B cell (primary cell): ENCODE measurements at regions of chr12 and their contacts with region 1.

Region 1: GRCh38 chr12:113422030-113422885 is at the start of gene SDSL:
- DNase-seq: peak; percentile 74
- ATAC-seq: peak; percentile 93
- H3K4me3 ChIP-seq: peak within 1 kb of the TSS in 1 of 5 experiments; percentile 8
- H3K4me3 Mint-ChIP-seq: peak within 1 kb of the TSS; percentile 79
- H3K27ac ChIP-seq: no peak within 1 kb of the TSS
- H3K27ac Mint-ChIP-seq: peak within 1 kb of the TSS; percentile 53
- H3K4me1 ChIP-seq: peaks cover 10 to 18% of the 10 kb centered on the region in 2 donors
- H3K4me1 Mint-ChIP-seq: peaks cover 20% of the 10 kb centered on the region
- H3K27me3 ChIP-seq: peaks cover 0 to 7% (median 2%) of the 10 kb centered on the region in 4 experiments
- H3K27me3 Mint-ChIP-seq: peaks cover 14% of the 10 kb centered on the region
- CTCF ChIP-seq: no peak
- total RNA-seq, gene SDSL: 0.64 and 1.1 TPM in 2 replicates

Region 2: GRCh38 chr12:112950701-112951100 is 471.6 kb before region 1 on chr12:
- CTCF ChIA-PET with region 1: no interaction called
- POLR2A ChIA-PET with region 1: no interaction called
- intact Hi-C with region 1: no loop called
- DNase-seq: no peak
- ATAC-seq: no peak
- H3K4me3 ChIP-seq: no peak overlapping the region
- H3K4me3 Mint-ChIP-seq: no peak overlapping the region
- H3K27ac ChIP-seq: no peak overlapping the region
- H3K27ac Mint-ChIP-seq: no peak overlapping the region
- H3K4me1 ChIP-seq: no peaks in the 10 kb centered on the region
- H3K4me1 Mint-ChIP-seq: no peaks in the 10 kb centered on the region
- H3K27me3 ChIP-seq: no peaks in the 10 kb centered on the region
- H3K27me3 Mint-ChIP-seq: no peaks in the 10 kb centered on the region
- CTCF ChIP-seq: no peak

Region 3: DNA sequence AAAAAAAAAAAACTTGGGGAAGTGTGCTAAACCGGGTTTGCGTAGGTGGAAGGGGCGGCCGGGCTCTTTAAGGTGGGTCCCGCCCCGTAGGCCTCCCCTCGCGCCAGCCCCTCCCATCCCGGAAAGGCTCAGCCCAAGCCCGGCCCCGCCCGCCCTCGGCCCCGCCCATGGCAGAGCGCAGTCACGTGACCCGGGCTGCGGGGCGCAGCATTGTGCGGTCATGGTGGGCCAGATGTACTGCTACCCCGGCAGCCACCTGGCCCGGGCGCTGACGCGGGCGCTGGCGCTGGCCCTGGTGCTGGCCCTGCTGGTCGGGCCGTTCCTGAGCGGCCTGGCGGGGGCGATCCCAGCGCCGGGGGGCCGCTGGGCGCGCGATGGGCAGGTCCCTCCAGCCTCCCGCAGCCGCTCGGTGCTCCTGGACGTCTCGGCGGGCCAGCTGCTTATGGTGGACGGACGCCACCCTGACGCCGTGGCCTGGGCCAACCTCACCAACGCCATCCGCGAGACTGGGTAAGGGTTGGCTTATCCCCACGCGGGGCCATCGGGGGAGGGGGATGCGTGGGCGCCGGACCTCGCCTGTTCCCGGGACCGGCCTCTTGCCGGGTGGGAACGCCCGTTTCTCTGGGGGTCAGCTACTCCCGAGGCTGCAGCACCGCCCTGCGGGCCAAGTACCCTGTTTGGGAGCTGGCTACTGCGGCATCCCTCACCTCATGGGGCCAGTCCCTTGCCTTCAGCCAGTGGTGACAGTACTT is 63.7 kb before region 1 on chr12 and contains the start of gene PLBD2:
- CTCF ChIA-PET with region 1: no interaction called
- POLR2A ChIA-PET with region 1: no interaction called
- intact Hi-C with region 1: loop called (anchors 1 kb)
- DNase-seq: peak; percentile 97
- ATAC-seq: peak; percentile 97
- H3K4me3 ChIP-seq: peak within 1 kb of the TSS; percentile 51 to 90 (median 68)
- H3K4me3 Mint-ChIP-seq: peak within 1 kb of the TSS; percentile 91
- H3K27ac ChIP-seq: peak within 1 kb of the TSS; percentile 36 to 79
- H3K27ac Mint-ChIP-seq: peak within 1 kb of the TSS; percentile 91
- H3K4me1 ChIP-seq: peaks cover 11 to 18% of the 10 kb centered on the region in 2 donors
- H3K4me1 Mint-ChIP-seq: peaks cover 12% of the 10 kb centered on the region
- H3K27me3 ChIP-seq: peaks cover 0 to 2% (median 0%) of the 10 kb centered on the region in 4 experiments
- H3K27me3 Mint-ChIP-seq: no peaks in the 10 kb centered on the region
- CTCF ChIP-seq: no peak
- total RNA-seq, gene PLBD2: 11.6 and 14.0 TPM in 2 replicates

Region 4: DNA sequence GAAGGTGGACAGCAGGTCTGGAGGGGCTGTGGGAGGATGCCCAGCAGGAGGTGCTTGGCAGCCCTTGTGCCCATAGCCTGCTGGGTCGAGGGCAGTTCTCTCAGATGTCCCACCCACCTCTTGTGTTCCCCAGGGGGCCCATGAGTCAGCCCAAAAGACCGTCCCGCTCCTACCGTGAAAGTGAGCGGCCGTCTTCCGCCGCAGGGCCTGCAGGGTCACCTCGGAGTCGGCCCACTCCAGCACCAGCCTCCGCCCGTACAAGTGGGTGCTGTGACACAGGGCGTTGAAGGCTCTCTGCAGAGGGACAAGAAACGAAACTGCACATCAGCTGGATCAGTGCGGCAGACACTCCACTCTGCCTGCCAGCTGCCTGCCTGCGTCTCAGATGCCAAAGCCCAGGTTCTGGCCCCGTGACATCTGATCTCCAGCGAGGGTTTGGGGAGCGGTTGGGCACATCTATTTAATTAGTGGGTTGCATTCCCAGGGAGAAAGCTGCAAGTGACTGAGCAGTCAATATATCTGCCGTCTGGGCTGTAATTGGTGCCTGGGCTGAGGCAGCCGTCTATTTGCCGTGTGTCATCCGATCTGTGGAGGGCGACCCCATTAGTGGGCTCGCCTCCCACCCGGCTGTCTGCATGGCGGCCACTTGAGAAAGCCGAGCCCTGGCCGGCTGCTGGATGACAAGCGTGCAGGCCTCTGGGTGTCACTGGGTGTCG is 422.4 kb after region 1 on chr12:
- CTCF ChIA-PET with region 1: no interaction called
- POLR2A ChIA-PET with region 1: no interaction called
- intact Hi-C with region 1: no loop called
- DNase-seq: no peak
- ATAC-seq: no peak
- H3K4me3 ChIP-seq: no peak overlapping the region
- H3K4me3 Mint-ChIP-seq: no peak overlapping the region
- H3K27ac ChIP-seq: no peak overlapping the region
- H3K27ac Mint-ChIP-seq: no peak overlapping the region
- H3K4me1 ChIP-seq: no peaks in the 10 kb centered on the region
- H3K4me1 Mint-ChIP-seq: no peaks in the 10 kb centered on the region
- H3K27me3 ChIP-seq: no peaks in the 10 kb centered on the region
- H3K27me3 Mint-ChIP-seq: no peaks in the 10 kb centered on the region
- CTCF ChIP-seq: no peak